ENCODE measurements at regions of chr2 and their contacts with region 1.

Region 1: GRCh38 chr2:46469116-46469515 is 10.2 kb upstream of the TMEM247 start:
- DNase-seq: no peak
- ATAC-seq: no peak
- H3K4me3 ChIP-seq: no peak overlapping the region
- H3K27ac ChIP-seq: no peak overlapping the region
- H3K4me1 ChIP-seq: no peaks in the 10 kb centered on the region
- H3K27me3 ChIP-seq: no peaks in the 10 kb centered on the region
- CTCF ChIP-seq: no peak

Region 2: DNA sequence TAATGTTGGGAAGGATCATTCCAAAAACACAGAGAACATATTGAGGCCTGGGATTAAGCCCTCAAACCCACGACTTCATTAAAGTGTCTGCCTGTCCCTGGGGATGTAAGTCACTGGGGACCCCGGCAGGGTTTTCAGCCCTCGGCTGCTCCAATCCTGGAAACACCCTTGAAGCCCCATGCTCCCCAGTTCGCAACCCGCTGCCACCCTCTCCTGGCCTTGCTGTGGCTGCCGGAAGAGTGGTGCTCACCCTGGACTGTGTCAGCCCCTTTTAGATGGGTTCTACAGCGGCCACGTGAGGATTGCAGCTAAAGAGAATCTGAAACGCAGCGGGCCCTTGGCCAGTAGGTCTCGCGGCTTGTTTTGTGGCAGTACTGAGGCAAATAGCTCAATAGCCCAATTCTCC is 91.9 kb before region 1 on chr2:
- intact Hi-C with region 1: no loop called
- DNase-seq: no peak
- ATAC-seq: peak in 1 of 4 donors; percentile 38
- H3K4me3 ChIP-seq: no peak overlapping the region
- H3K27ac ChIP-seq: no peak overlapping the region
- H3K4me1 ChIP-seq: no peaks in the 10 kb centered on the region
- H3K27me3 ChIP-seq: no peaks in the 10 kb centered on the region
- CTCF ChIP-seq: no peak

Region 3: DNA sequence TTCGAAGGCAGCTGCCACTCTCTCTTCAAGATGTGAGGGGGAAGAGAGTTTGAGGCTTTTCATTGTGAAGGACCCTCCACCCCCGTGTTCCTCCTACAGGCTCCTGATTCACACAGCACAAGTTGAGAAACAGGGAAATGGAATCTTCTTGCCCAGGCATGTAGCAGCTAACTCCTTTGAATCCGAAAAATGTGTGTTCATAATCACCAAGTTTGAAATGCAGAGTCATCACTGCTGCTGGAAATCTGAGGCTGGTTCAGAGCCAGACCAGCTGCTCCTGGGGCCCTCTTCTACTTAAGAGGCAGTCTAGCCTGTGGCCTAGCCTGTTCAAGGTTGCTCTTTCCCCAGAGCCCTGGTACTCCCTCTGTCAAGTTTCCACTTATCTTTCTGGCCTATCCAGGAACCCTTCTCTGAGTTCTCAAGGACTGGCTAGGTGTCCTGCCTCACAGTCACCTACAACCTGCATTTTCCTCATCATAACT is 176.6 kb after region 1 on chr2:
- intact Hi-C with region 1: loop called in 1 of 3 experiments (anchors 5 kb)
- DNase-seq: no peak
- ATAC-seq: peak in 3 of 4 donors; percentile 68 to 74 (median 73)
- H3K4me3 ChIP-seq: no peak overlapping the region
- H3K27ac ChIP-seq: no peak overlapping the region
- H3K4me1 ChIP-seq: no peaks in the 10 kb centered on the region
- H3K27me3 ChIP-seq: no peaks in the 10 kb centered on the region
- CTCF ChIP-seq: no peak

Measured in pancreas (tissue), 10 donors.